ENCODE measurements at regions of chrX and their contacts with region 1.

Region 1: GRCh38 chrX:130120746-130121504 is 10.6 kb upstream of the ELF4 start:
- DNase-seq: peak; percentile 76 to 85 (median 81)
- ATAC-seq: peak; percentile 44 to 77 (median 76)
- H3K4me3 ChIP-seq: peak overlapping the region in 11 of 12 donors; percentile 31 to 61 (median 46)
- H3K27ac ChIP-seq: peak overlapping the region in 11 of 12 donors; percentile 62 to 88 (median 75)
- H3K4me1 ChIP-seq: peaks cover 0 to 30% (median 7%) of the 10 kb centered on the region in 12 donors
- H3K27me3 ChIP-seq: peaks cover 0 to 9% (median 0%) of the 10 kb centered on the region in 9 donors
- CTCF ChIP-seq: peak; percentile 53 to 78 (median 64)
- POLR2A ChIP-seq: no peak

Region 2: GRCh38 chrX:129737916-129738315 is 383.0 kb before region 1 on chrX:
- intact Hi-C with region 1: loop called in 1 of 10 experiments (anchors 5 kb)
- DNase-seq: no peak
- ATAC-seq: peak in 2 of 4 donors; percentile 41 to 70
- H3K4me3 ChIP-seq: no peak overlapping the region
- H3K27ac ChIP-seq: peak overlapping the region in 2 of 12 donors; percentile 11 to 52
- H3K4me1 ChIP-seq: peaks cover 0 to 20% (median 0%) of the 10 kb centered on the region in 12 donors
- H3K27me3 ChIP-seq: peaks cover 0 to 3% (median 0%) of the 10 kb centered on the region in 9 donors
- CTCF ChIP-seq: no peak
- POLR2A ChIP-seq: no peak

Region 3: GRCh38 chrX:130060122-130061069 is 60.5 kb before region 1 on chrX:
- intact Hi-C with region 1: no loop called
- DNase-seq: peak; percentile 74 to 92 (median 81)
- ATAC-seq: peak; percentile 81 to 94 (median 92)
- H3K4me3 ChIP-seq: peak overlapping the region; percentile 21 to 67 (median 55)
- H3K27ac ChIP-seq: peak overlapping the region in 11 of 12 donors; percentile 18 to 77 (median 43)
- H3K4me1 ChIP-seq: peaks cover 0 to 6% (median 0%) of the 10 kb centered on the region in 12 donors
- H3K27me3 ChIP-seq: no peaks in the 10 kb centered on the region
- CTCF ChIP-seq: peak; percentile 74 to 90 (median 80)
- POLR2A ChIP-seq: peak in 1 of 2 donors; percentile 9

Region 4: DNA sequence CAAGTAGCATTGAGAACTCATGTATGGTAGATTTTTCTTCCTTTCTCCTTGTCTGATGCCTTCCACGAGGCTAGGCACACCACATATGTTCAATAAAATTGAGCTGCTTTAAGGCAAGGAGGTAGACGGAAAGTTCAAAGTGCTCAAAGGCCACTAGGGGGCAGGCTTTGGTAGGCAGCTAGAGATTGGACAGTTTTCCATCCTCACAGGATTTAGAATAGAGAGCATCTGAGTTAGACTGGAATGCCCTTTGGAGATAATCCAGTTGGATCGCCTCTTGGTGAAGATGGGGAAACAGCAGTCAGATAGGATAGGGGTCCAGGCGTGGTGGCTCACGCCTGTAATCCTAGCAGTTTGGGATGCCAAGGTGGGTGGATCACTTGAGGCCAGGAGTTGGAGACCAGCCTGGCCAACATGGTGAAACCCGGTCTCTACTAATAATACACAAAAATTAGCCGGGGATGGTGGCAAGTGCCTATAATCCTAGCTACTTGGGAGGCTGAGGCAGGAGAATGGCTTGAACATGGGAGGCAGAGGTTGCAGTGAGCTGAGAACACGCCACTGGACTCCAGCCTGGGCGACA is 41.0 kb before region 1 on chrX:
- intact Hi-C with region 1: loop called in 9 of 10 experiments (anchors 2 to 10 kb)
- DNase-seq: peak in 3 of 5 donors; percentile 40 to 61 (median 53)
- ATAC-seq: peak; percentile 30 to 66 (median 53)
- H3K4me3 ChIP-seq: no peak overlapping the region
- H3K27ac ChIP-seq: no peak overlapping the region
- H3K4me1 ChIP-seq: peaks cover 0 to 45% (median 12%) of the 10 kb centered on the region in 12 donors
- H3K27me3 ChIP-seq: no peaks in the 10 kb centered on the region
- CTCF ChIP-seq: peak; percentile 55 to 77 (median 64)
- POLR2A ChIP-seq: no peak

Region 5: GRCh38 chrX:130165703-130166502 is 45.0 kb after region 1 on chrX and contains the start of gene AIFM1:
- intact Hi-C with region 1: loop called in 5 of 10 experiments (anchors 1 to 10 kb)
- DNase-seq: peak; percentile 91 to 95 (median 94)
- ATAC-seq: peak; percentile 97 to 98 (median 98)
- H3K4me3 ChIP-seq: peak within 1 kb of the TSS; percentile 8 to 93 (median 68)
- H3K27ac ChIP-seq: peak within 1 kb of the TSS; percentile 80 to 97 (median 88)
- H3K4me1 ChIP-seq: peaks cover 0 to 25% (median 12%) of the 10 kb centered on the region in 12 donors
- H3K27me3 ChIP-seq: peaks cover 0 to 4% (median 0%) of the 10 kb centered on the region in 9 donors
- CTCF ChIP-seq: no peak
- POLR2A ChIP-seq: peak in 1 of 2 donors; percentile 61
- total RNA-seq, gene AIFM1: 73.7 to 146 (median 109) TPM